Ovary (tissue), 10 donors: ENCODE measurements at regions of chr3 and their contacts with region 1.

Region 1: GRCh38 chr3:11155341-11156025 is 1.2 kb downstream of the HRH1 start:
- DNase-seq: peak; percentile 79 to 85 (median 81)
- H3K4me3 ChIP-seq: peak overlapping the region; percentile 62
- H3K27ac ChIP-seq: peak overlapping the region; percentile 8 to 21
- H3K4me1 ChIP-seq: peaks cover 9% of the 10 kb centered on the region
- H3K27me3 ChIP-seq: no peaks in the 10 kb centered on the region
- CTCF ChIP-seq: peak; percentile 59 to 76 (median 73)
- EP300 ChIP-seq: no peak
- POLR2A ChIP-seq: no peak

Region 2: GRCh38 chr3:11201246-11202024 is 46.0 kb after region 1 on chr3:
- intact Hi-C with region 1: loop called in 1 of 4 experiments (anchors 5 kb)
- DNase-seq: no peak
- H3K4me3 ChIP-seq: no peak overlapping the region
- H3K27ac ChIP-seq: no peak overlapping the region
- H3K4me1 ChIP-seq: peaks cover 1% of the 10 kb centered on the region
- H3K27me3 ChIP-seq: no peaks in the 10 kb centered on the region
- CTCF ChIP-seq: no peak
- EP300 ChIP-seq: no peak
- POLR2A ChIP-seq: no peak

Region 3: DNA sequence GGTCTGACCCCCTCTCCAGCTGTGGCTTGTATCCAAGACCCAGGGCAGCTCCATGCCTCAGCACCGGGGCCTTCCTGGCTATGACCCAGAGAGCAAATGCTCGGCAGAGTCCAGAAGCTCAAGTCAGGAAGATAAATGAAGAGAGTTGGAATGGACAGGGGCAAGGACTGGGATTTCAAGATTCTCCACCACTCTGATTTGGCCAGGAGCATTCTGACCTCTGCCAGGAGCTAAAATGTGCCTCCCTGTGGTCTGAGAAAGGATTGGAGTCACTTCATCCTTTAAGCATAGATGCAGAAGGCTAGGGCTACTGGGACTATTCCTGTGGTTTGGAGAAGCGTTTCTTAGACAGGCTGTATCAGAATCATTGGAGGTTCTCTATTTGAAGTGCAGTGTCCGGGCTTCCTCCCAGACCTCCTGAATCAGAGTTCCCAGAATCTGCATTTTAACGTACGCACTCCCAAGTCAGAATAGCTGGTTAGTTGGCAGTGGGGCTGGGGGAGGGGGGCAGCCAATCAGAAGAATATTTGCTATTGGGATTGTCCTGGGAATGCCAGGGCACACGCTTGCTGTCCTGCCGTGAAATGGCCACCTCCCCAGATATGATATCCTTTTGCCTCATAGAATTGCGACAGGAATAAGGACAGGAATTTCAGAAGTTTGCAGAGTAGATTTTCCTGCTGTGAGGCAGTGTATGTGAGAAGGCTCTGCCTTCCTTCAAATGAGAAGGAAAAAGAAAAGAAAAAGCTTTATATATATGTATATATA is 56.2 kb after region 1 on chr3:
- intact Hi-C with region 1: loop called in 2 of 4 experiments (anchors 2 to 10 kb)
- DNase-seq: peak in 1 of 5 donors; percentile 46
- H3K4me3 ChIP-seq: no peak overlapping the region
- H3K27ac ChIP-seq: no peak overlapping the region
- H3K4me1 ChIP-seq: peaks cover 9% of the 10 kb centered on the region
- H3K27me3 ChIP-seq: no peaks in the 10 kb centered on the region
- CTCF ChIP-seq: no peak
- EP300 ChIP-seq: no peak
- POLR2A ChIP-seq: no peak

Region 4: DNA sequence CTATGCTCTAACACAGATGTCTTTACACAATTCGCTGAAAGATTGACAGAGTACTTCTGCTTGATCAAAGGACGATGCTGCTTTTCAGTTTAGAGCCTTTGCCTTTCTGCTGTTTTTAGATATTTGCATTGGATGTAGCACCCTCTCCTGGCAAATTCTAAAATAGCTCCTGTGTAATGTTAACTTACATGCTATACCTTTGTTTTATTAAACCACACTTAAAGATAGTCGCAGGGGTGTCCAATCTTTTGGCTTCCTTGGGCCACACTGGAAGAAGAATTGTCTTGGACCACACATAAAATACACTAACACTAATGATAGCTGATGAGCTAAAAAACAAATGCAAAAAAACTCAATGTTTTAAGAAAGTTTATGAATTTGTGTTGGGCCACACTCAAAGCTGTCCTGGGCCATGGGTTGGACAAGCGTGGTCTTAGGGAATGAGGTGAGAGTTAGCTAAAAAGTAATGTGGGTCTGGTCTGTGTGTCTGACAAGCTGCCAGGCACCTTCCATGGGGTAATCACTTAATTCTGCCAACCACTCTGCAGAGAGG is 179.6 kb after region 1 on chr3:
- intact Hi-C with region 1: loop called in 3 of 4 experiments (anchors 5 to 10 kb)
- DNase-seq: no peak
- H3K4me3 ChIP-seq: no peak overlapping the region
- H3K27ac ChIP-seq: no peak overlapping the region
- H3K4me1 ChIP-seq: no peaks in the 10 kb centered on the region
- H3K27me3 ChIP-seq: no peaks in the 10 kb centered on the region
- CTCF ChIP-seq: peak; percentile 42 to 72 (median 68)
- EP300 ChIP-seq: no peak
- POLR2A ChIP-seq: no peak